B cell (primary cell): ENCODE measurements at regions of chr12 and their contacts with region 1.

Region 1: DNA sequence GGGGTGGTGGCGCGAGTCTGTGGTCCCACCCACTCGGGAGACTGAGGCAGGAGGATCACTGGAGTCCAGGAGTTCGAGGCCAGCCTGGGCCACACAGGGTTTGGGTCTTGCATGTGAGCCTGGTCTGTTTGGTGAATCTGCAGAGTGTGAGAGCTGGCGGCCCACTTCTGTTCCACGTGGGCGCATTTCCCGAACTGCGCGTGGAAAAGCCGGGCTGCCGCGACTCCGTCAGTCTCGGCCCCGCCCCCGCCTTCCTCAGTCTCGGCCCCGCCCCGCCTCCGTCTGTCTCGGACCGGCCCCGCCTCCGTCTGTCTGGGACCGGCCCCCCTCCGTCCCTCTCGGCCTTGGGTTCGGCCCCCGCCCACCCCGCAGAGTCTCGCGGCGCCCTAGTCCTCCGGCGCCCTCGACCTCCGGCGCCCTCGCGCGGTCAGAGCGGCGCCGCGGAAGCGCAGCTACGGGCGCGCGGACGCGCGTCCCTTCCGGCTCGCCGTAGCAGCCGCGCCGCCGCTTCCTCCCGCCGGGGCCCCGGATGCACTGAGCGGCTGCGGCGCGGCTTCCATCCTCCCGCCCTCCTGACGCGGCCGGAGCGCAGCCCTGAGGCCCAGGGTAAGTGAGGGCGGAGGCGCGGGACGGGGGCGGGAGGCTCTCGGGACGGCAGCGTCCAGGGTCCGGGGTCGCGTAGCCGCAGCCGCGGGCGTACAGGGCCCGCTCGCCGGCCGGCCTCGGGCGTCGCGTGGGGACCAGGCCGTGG is at the start of gene EP400:
- DNase-seq: peak; percentile 96
- ATAC-seq: peak; percentile 97
- H3K4me3 ChIP-seq: peak within 1 kb of the TSS; percentile 50 to 89 (median 72)
- H3K4me3 Mint-ChIP-seq: peak within 1 kb of the TSS; percentile 92
- H3K27ac ChIP-seq: peak within 1 kb of the TSS; percentile 29 to 80
- H3K27ac Mint-ChIP-seq: peak within 1 kb of the TSS; percentile 90
- H3K4me1 ChIP-seq: peaks cover 8 to 26% of the 10 kb centered on the region in 2 donors
- H3K4me1 Mint-ChIP-seq: peaks cover 26% of the 10 kb centered on the region
- H3K27me3 ChIP-seq: no peaks in the 10 kb centered on the region
- H3K27me3 Mint-ChIP-seq: no peaks in the 10 kb centered on the region
- CTCF ChIP-seq: peak; percentile 65
- total RNA-seq, gene EP400: 82.2 and 88.1 TPM in 2 replicates

Region 2: DNA sequence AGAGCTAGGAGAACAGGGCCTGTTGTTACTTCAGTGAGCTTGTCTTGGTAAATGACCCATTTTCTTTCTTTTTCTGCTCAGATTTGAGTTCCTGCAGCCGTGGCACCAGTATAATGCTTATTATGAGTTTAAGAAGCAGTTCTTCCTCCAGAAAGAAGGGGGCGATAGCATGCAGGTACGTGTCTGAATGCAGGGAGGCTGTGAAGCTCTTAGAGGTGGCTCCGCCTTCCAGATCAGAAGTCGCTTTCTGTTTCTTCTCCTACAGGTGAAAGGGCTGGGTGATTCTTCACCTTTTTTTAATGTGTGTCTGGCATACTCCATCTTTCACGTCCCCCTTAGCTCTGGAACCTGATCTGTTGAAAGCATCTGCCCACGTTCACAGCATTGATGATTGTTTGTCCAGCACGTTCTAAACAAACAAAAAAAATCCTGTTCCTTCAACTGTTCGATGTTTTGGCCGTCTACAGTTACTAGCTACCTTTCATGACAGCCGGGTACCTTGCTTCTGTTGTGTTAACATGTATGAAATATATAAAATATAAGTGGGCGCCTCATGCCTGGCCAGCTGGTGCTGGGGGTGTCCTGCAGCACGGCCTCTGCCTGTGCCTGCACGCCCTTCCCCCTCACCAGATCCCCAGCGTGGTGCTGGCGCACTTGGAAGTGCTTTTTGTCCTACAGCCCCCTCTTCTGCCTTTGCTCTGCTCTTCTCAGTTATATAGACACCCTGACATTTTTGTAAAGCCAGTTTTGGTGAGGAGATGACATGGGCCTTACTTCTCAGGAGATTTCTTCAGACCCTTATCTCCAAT is 194.1 kb before region 1 on chr12:
- CTCF ChIA-PET with region 1: no interaction called
- POLR2A ChIA-PET with region 1: no interaction called
- intact Hi-C with region 1: loop called (anchors 1 kb)
- DNase-seq: peak; percentile 80
- ATAC-seq: peak; percentile 77
- H3K4me3 ChIP-seq: no peak overlapping the region
- H3K4me3 Mint-ChIP-seq: no peak overlapping the region
- H3K27ac ChIP-seq: no peak overlapping the region
- H3K27ac Mint-ChIP-seq: no peak overlapping the region
- H3K4me1 ChIP-seq: peaks cover 0 to 5% of the 10 kb centered on the region in 2 donors
- H3K4me1 Mint-ChIP-seq: peaks cover 6% of the 10 kb centered on the region
- H3K27me3 ChIP-seq: no peaks in the 10 kb centered on the region
- H3K27me3 Mint-ChIP-seq: no peaks in the 10 kb centered on the region
- CTCF ChIP-seq: peak; percentile 71

Region 3: GRCh38 chr12:131808744-131809371 is 140.7 kb before region 1 on chr12:
- CTCF ChIA-PET with region 1: no interaction called
- POLR2A ChIA-PET with region 1: no interaction called
- intact Hi-C with region 1: no loop called
- DNase-seq: peak; percentile 62
- ATAC-seq: peak; percentile 68
- H3K4me3 ChIP-seq: peak overlapping the region in 4 of 5 experiments; percentile 36 to 62 (median 60)
- H3K4me3 Mint-ChIP-seq: peak overlapping the region; percentile 77
- H3K27ac ChIP-seq: peak overlapping the region in 1 of 2 donors; percentile 64
- H3K27ac Mint-ChIP-seq: peak overlapping the region; percentile 73
- H3K4me1 ChIP-seq: peaks cover 4 to 10% of the 10 kb centered on the region in 2 donors
- H3K4me1 Mint-ChIP-seq: peaks cover 9% of the 10 kb centered on the region
- H3K27me3 ChIP-seq: no peaks in the 10 kb centered on the region
- H3K27me3 Mint-ChIP-seq: no peaks in the 10 kb centered on the region
- CTCF ChIP-seq: no peak

Region 4: DNA sequence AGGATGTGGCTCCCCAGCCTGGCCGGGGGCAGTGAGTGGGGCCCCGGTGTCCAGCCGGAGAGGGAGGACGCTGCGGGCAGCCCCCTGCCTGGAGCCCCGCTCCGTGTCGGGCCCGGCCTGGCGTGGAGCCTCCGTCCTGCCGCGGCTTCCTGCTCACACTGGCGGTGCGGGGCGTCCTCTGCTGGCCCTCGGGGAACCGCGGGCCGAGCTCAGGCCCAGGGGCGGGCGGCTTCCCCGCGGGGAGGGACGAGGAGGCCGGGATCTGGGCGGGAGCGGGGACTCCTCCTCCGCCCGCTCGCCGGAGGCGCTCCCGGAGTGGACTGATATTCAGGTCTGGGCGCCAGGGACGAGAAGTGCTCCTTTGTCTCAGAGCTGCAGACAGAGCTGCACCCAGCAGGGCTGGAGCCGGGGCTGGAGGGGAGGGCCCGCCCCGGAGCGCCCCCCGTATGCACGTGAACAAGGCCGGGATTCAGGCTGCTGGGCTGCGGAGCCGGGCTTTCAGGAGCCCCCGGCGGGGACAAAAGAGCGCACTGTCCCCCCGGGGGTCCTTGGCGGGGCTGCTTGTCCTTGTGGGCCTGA is 119.2 kb before region 1 on chr12:
- CTCF ChIA-PET with region 1: interaction called, 8 read pairs
- POLR2A ChIA-PET with region 1: interaction called, 3 read pairs
- intact Hi-C with region 1: loop called (anchors 2 kb)
- DNase-seq: peak; percentile 76
- ATAC-seq: peak; percentile 46
- H3K4me3 ChIP-seq: peak overlapping the region in 4 of 5 experiments; percentile 60 to 75 (median 67)
- H3K4me3 Mint-ChIP-seq: peak overlapping the region; percentile 79
- H3K27ac ChIP-seq: no peak overlapping the region
- H3K27ac Mint-ChIP-seq: peak overlapping the region; percentile 20
- H3K4me1 ChIP-seq: peaks cover 26 to 31% of the 10 kb centered on the region in 2 donors
- H3K4me1 Mint-ChIP-seq: peaks cover 33% of the 10 kb centered on the region
- H3K27me3 ChIP-seq: peaks cover 0 to 17% (median 8%) of the 10 kb centered on the region in 4 experiments
- H3K27me3 Mint-ChIP-seq: peaks cover 14% of the 10 kb centered on the region
- CTCF ChIP-seq: peak; percentile 69

Region 5: DNA sequence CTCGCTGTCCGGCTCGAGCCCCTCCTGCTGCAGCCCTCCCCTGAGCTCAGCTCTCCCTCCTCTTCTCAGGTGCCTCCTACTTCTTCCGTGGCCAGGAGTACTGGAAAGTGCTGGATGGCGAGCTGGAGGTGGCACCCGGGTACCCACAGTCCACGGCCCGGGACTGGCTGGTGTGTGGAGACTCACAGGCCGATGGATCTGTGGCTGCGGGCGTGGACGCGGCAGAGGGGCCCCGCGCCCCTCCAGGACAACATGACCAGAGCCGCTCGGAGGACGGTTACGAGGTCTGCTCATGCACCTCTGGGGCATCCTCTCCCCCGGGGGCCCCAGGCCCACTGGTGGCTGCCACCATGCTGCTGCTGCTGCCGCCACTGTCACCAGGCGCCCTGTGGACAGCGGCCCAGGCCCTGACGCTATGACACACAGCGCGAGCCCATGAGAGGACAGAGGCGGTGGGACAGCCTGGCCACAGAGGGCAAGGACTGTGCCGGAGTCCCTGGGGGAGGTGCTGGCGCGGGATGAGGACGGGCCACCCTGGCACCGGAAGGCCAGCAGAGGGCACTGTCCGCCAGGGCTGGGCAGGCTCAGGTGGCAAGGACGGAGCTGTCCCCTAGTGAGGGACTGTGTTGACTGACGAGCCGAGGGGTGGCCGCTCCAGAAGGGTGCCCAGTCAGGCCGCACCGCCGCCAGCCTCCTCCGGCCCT is 98.6 kb before region 1 on chr12:
- CTCF ChIA-PET with region 1: interaction called, 5 read pairs
- POLR2A ChIA-PET with region 1: interaction called, 3 read pairs
- intact Hi-C with region 1: loop called (anchors 2 kb)
- DNase-seq: no peak
- ATAC-seq: peak; percentile 52
- H3K4me3 ChIP-seq: no peak overlapping the region
- H3K4me3 Mint-ChIP-seq: no peak overlapping the region
- H3K27ac ChIP-seq: no peak overlapping the region
- H3K27ac Mint-ChIP-seq: no peak overlapping the region
- H3K4me1 ChIP-seq: peaks cover 18 to 19% of the 10 kb centered on the region in 2 donors
- H3K4me1 Mint-ChIP-seq: peaks cover 18% of the 10 kb centered on the region
- H3K27me3 ChIP-seq: peaks cover 0 to 2% (median 0%) of the 10 kb centered on the region in 4 experiments
- H3K27me3 Mint-ChIP-seq: peaks cover under 1% of the 10 kb centered on the region
- CTCF ChIP-seq: peak; percentile 60

Region 6: DNA sequence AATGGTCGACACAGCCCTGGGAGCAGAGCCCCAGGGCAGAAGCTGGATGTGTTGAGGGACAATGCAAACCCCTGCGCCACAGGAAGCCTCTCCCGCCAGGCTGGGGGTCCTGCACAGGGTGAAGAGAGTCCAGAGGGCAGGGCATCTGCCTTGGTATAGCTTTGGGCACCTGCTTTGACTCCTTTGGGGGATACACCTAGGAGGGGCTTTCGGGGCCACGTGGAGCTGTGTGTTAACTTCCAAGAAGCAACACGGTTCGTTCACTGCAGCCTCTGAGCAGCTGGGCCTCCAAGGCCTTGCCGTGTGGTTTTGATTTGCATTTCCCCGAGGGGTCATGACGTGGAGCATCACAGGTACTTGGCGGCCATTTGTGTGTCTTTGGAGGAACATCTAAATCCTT is 26.3 kb before region 1 on chr12:
- CTCF ChIA-PET with region 1: interaction called, 4 read pairs
- POLR2A ChIA-PET with region 1: interaction called, 4 read pairs
- intact Hi-C with region 1: loop called (anchors 1 kb)
- DNase-seq: peak; percentile 88
- ATAC-seq: peak; percentile 81
- H3K4me3 ChIP-seq: peak overlapping the region in 3 of 5 experiments; percentile 15 to 33 (median 29)
- H3K4me3 Mint-ChIP-seq: peak overlapping the region; percentile 76
- H3K27ac ChIP-seq: peak overlapping the region; percentile 61 to 68
- H3K27ac Mint-ChIP-seq: peak overlapping the region; percentile 78
- H3K4me1 ChIP-seq: peaks cover 31 to 44% of the 10 kb centered on the region in 2 donors
- H3K4me1 Mint-ChIP-seq: peaks cover 39% of the 10 kb centered on the region
- H3K27me3 ChIP-seq: no peaks in the 10 kb centered on the region
- H3K27me3 Mint-ChIP-seq: no peaks in the 10 kb centered on the region
- CTCF ChIP-seq: no peak